Calu3 (cell line): ENCODE measurements at regions of chr9 and their contacts with region 1.

Region 1: DNA sequence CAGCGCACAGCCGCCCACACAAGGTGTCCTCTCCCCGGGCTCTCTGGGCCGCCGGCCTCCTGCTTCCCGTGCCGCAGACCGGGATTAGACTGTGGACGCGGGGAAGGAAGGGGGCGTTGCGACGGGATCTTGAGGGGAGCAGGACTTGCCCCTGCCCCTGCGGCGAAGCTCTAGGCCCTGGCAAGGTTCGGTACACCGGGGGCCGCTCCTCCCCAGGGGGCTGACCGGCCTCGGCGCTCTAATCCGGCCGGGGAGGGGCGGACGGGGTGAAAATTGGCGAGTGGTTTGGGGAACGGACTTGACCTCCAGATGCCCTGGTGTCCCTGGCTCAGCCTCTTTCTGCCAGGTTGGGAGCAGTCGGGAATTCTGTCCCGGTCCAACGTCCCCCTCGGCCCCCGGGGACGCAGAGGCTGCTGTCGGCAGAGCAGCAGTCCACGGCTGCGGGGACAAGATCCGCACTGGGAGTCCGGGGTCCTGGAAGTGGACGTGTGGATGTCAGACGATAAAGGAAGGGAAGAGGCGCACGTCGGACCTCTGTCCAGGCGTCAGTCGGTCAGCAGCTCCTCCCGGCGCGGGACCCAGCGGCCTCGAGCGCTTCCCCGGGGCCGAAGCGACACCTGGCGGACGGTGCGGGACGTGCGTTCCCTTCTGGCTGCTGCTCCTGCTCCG is 1.9 kb upstream of the CNTFR start:
- DNase-seq: peak; percentile 88
- H3K4me3 Mint-ChIP-seq: peak overlapping the region; percentile 65
- H3K27ac Mint-ChIP-seq: no peak overlapping the region
- H3K4me1 Mint-ChIP-seq: no peaks in the 10 kb centered on the region
- H3K27me3 Mint-ChIP-seq: peaks cover 85% of the 10 kb centered on the region
- CTCF ChIP-seq: peak; percentile 79

Region 2: DNA sequence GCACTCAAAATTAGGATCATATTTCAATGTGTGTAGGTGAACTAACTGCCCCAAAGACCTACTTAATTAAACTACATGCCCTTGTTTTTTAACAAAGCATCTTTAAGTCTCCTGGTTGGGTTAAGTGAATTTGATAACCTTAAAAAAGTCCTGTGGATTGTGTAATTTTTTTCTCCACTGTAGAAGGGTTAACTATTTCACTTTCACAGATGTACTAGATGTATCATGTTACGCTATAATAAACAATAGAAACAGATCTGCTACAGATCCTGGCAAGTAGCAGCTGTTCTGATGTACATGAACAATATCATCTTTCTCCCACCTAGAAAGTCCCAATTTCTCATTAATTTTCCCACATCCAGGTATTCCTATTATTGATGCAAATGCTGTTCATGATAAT is 281.2 kb before region 1 on chr9:
- CTCF ChIA-PET with region 1: no interaction called
- intact Hi-C with region 1: no loop called
- DNase-seq: no peak
- H3K4me3 Mint-ChIP-seq: no peak overlapping the region
- H3K27ac Mint-ChIP-seq: no peak overlapping the region
- H3K4me1 Mint-ChIP-seq: no peaks in the 10 kb centered on the region
- H3K27me3 Mint-ChIP-seq: no peaks in the 10 kb centered on the region
- CTCF ChIP-seq: no peak

Region 3: GRCh38 chr9:34546834-34547827 is 44.3 kb before region 1 on chr9:
- CTCF ChIA-PET with region 1: interaction called, 22 read pairs
- intact Hi-C with region 1: loop called (anchors 5 kb)
- DNase-seq: peak; percentile 70
- H3K4me3 Mint-ChIP-seq: no peak overlapping the region
- H3K27ac Mint-ChIP-seq: no peak overlapping the region
- H3K4me1 Mint-ChIP-seq: no peaks in the 10 kb centered on the region
- H3K27me3 Mint-ChIP-seq: peaks cover 48% of the 10 kb centered on the region
- CTCF ChIP-seq: peak; percentile 61

Region 4: GRCh38 chr9:34633851-34634550 is 42.6 kb after region 1 on chr9:
- CTCF ChIA-PET with region 1: no interaction called
- intact Hi-C with region 1: no loop called
- DNase-seq: peak; percentile 70
- H3K4me3 Mint-ChIP-seq: no peak overlapping the region
- H3K27ac Mint-ChIP-seq: no peak overlapping the region
- H3K4me1 Mint-ChIP-seq: peaks cover 10% of the 10 kb centered on the region
- H3K27me3 Mint-ChIP-seq: peaks cover 22% of the 10 kb centered on the region
- CTCF ChIP-seq: peak; percentile 48